ENCODE measurements at regions of chr5 and their contacts with region 1.

Region 1: GRCh38 chr5:141691867-141692532 is 10.0 kb upstream of the ARAP3 start:
- DNase-seq: peak; percentile 90
- ATAC-seq: peak; percentile 81
- H3K4me3 Mint-ChIP-seq: peak overlapping the region; percentile 68
- H3K27ac Mint-ChIP-seq: peak overlapping the region; percentile 46
- H3K4me1 Mint-ChIP-seq: peaks cover 19% of the 10 kb centered on the region
- H3K27me3 Mint-ChIP-seq: peaks cover 9% of the 10 kb centered on the region
- CTCF ChIP-seq: peak; percentile 92

Region 2: DNA sequence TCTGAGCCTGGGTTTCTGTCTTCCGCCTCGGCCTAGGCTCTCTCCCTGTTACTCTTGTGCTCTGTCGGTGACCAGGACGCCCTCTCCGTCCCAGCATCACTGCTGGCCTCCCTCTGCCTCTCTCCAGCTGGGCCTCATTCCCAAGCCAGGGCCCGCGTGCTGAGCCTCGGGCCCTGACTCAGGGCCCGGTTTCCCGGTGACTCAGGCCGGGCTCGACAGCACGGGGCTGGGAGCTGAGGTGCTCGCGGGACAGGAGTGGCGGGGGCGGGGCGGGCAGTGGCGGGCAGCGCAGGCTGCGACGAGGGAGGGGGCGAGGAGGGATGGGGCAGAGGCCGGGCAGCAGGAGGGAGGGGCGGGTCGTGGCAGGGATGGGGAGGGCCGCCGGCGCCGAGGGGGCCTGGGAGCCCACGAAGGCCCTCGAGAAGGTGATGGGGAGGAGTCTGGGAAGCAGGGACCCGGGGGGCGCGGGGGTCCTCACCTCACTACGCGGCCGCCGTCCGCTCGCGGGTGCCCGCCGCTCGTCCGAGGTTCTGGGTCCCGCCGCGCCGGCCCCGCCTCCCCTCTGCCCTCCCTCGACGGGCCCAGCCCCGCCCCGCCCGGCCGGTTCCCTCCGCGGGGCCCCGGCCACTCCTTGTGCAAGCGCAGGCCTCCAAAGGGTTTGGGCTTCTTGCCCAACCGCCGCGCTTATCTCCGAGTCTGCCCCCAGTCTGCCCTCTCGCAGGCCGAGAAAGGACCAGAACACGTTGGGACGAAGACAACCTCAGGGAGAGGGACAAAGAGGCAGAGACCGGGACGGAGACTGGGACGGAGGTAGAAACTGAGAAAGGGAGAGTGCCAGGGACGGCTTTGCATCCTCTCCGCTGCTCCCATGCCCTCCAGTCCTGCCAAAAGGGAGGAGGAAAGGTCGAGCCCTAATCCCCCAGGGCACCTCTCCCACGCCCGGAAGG is 10.0 kb before region 1 on chr5 and contains the start of gene ARAP3:
- CTCF ChIA-PET with region 1: interaction called, 85 read pairs
- POLR2A ChIA-PET with region 1: interaction called, 5 read pairs
- intact Hi-C with region 1: no loop called
- DNase-seq: peak; percentile 54
- ATAC-seq: peak; percentile 73
- H3K4me3 Mint-ChIP-seq: peak within 1 kb of the TSS; percentile 72
- H3K27ac Mint-ChIP-seq: peak within 1 kb of the TSS; percentile 68
- H3K4me1 Mint-ChIP-seq: peaks cover 24% of the 10 kb centered on the region
- H3K27me3 Mint-ChIP-seq: no peaks in the 10 kb centered on the region
- CTCF ChIP-seq: no peak
- total RNA-seq, gene ARAP3: 5.9 to 7.2 TPM

Region 3: DNA sequence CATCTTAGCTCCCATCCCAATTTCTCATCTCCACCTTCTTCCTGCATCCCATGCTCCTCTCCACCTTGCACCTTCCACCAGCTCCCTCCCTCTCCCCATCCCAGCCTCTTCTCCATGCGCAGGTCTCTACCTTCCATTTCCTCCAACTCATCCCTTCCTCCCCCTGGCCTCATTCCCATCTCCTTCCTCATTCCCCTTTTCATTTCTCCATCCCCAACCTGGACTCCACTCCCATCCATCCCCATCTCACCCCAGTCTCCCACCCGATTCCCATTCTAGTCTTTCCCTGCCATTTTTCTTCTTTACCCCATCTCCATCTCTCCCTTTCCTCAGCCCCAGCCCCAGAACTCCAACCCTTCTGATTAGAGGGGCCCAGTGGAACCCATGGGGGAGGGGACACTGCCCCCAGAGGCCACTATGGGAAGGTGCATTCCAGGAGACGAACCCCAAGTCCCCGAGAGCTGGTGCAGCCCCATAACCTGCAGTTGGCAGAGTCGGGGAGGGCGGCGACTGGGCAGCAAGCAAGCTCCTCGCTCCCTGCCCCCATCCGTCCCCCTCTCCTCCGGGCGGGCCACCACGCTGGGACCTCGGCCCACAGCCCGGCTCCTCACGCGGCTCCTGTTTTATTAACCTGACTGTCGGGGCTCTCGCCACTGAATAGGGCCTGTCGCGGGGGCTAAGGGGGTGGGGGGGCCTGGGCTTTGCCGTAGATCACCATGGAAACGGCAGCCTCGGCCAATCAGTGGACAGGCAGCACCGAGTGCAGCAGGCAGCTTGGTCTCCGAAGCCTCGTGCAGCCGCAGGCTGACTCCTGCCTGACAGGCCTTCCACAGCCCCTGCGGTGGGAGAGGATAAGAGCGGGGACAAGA is 119.5 kb after region 1 on chr5:
- CTCF ChIA-PET with region 1: interaction called, 61 read pairs
- POLR2A ChIA-PET with region 1: no interaction called
- intact Hi-C with region 1: loop called (anchors 5 kb)
- DNase-seq: peak; percentile 49
- ATAC-seq: peak; percentile 88
- H3K4me3 Mint-ChIP-seq: no peak overlapping the region
- H3K27ac Mint-ChIP-seq: no peak overlapping the region
- H3K4me1 Mint-ChIP-seq: no peaks in the 10 kb centered on the region
- H3K27me3 Mint-ChIP-seq: peaks cover 38% of the 10 kb centered on the region
- CTCF ChIP-seq: peak; percentile 77

Region 4: GRCh38 chr5:141825791-141826560 is 134.0 kb after region 1 on chr5:
- CTCF ChIA-PET with region 1: interaction called, 35 read pairs
- POLR2A ChIA-PET with region 1: no interaction called
- intact Hi-C with region 1: no loop called
- DNase-seq: peak; percentile 20
- ATAC-seq: peak; percentile 53
- H3K4me3 Mint-ChIP-seq: no peak overlapping the region
- H3K27ac Mint-ChIP-seq: no peak overlapping the region
- H3K4me1 Mint-ChIP-seq: no peaks in the 10 kb centered on the region
- H3K27me3 Mint-ChIP-seq: no peaks in the 10 kb centered on the region
- CTCF ChIP-seq: peak; percentile 38

Region 5: DNA sequence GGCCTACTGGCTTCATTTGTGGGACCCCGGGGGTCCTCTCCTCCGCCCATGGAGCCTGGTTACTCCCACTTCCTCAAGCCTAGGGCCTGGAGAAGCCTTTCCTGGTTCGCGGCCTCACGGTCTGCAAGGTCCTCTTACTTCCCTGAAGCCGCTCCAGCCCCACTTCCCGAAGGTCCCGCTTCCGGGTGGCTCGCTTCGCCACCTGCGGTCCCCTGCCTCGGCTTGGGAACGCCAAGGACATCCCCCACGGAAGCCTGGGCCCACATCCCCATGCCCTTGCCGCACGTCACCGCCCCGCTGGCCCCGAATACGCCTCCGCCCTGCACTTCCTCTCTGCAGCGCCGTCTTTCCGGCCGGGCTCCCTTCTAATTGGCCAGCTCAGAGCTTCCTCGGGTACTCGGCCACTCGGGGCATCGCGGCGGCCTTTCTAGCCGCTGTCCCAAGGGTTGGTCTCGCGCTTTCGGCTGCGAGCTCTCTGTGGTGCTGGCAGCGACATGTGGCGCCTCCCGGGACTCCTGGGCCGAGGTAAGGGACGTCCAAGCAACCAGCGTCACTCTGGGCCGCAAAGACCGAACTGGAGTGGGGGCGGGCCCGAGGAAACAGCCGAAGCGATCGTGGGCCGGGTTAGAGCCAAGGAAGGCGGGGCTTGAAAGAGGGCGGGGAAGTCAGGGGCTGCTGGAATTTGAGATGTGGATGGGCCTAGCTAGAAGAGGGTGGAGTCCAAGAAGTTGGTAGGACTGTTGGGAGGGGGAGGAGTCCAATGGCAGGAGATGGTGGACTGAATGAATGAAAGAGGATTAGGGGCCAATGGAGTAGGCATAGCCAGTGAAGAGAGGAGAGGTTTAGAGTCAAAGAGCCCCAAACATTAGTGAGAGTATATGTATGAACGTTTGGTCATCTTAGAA is 231.7 kb after region 1 on chr5 and contains the start of gene DELE1:
- CTCF ChIA-PET with region 1: interaction called, 33 read pairs
- POLR2A ChIA-PET with region 1: no interaction called
- intact Hi-C with region 1: no loop called
- DNase-seq: peak; percentile 96
- ATAC-seq: peak; percentile 93
- H3K4me3 Mint-ChIP-seq: peak within 1 kb of the TSS; percentile 82
- H3K27ac Mint-ChIP-seq: peak within 1 kb of the TSS; percentile 91
- H3K4me1 Mint-ChIP-seq: peaks cover 24% of the 10 kb centered on the region
- H3K27me3 Mint-ChIP-seq: no peaks in the 10 kb centered on the region
- CTCF ChIP-seq: no peak
- total RNA-seq, gene DELE1: 50.1 to 57.4 TPM

Measured in activated CD8-positive, alpha-beta T cell treated with anti-CD3 and anti-CD28 coated beads for 36 hours (primary cell).